ENCODE measurements at regions of chr2 and their contacts with region 1.

Region 1: DNA sequence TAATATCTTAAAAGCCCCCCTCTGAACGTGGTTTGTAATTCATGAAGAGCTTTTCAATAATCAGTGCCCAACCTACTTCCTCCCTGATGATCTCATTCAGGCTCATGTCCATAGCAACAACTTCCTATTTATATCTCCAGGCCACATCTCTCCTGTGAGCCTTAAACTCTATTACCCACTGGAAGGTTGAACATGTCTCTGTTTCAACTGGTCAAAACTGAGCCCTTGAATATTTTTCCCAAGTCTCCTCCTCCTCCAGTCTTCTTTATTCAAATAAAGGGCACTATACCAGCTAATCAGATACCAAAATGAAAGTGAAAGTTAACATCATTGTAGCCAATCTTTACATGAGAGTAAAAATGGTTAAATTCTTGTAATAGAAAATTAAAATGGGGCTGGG is 63.7 kb upstream of the ITGA4 start:
- DNase-seq: peak; percentile 18
- ATAC-seq: peak; percentile 90
- H3K4me3 ChIP-seq: peak overlapping the region; percentile 55 to 66 (median 55)
- H3K27ac ChIP-seq: no peak overlapping the region
- H3K4me1 ChIP-seq: no peaks in the 10 kb centered on the region
- H3K27me3 ChIP-seq: no peaks in the 10 kb centered on the region
- CTCF ChIP-seq: no peak
- EP300 ChIP-seq: no peak
- POLR2A ChIP-seq: no peak
- RAD21 ChIP-seq: no peak

Region 2: GRCh38 chr2:181308766-181309515 is 84.5 kb before region 1 on chr2:
- CTCF ChIA-PET with region 1: no interaction called
- POLR2A ChIA-PET with region 1: interaction called, 3 read pairs
- in situ Hi-C with region 1: no loop called
- intact Hi-C with region 1: loop called (anchors 2 kb)
- DNase-seq: no peak
- ATAC-seq: no peak
- H3K4me3 ChIP-seq: no peak overlapping the region
- H3K27ac ChIP-seq: no peak overlapping the region
- H3K4me1 ChIP-seq: peaks cover 23% of the 10 kb centered on the region
- H3K27me3 ChIP-seq: no peaks in the 10 kb centered on the region
- CTCF ChIP-seq: no peak
- EP300 ChIP-seq: no peak
- POLR2A ChIP-seq: no peak
- RAD21 ChIP-seq: no peak

Region 3: DNA sequence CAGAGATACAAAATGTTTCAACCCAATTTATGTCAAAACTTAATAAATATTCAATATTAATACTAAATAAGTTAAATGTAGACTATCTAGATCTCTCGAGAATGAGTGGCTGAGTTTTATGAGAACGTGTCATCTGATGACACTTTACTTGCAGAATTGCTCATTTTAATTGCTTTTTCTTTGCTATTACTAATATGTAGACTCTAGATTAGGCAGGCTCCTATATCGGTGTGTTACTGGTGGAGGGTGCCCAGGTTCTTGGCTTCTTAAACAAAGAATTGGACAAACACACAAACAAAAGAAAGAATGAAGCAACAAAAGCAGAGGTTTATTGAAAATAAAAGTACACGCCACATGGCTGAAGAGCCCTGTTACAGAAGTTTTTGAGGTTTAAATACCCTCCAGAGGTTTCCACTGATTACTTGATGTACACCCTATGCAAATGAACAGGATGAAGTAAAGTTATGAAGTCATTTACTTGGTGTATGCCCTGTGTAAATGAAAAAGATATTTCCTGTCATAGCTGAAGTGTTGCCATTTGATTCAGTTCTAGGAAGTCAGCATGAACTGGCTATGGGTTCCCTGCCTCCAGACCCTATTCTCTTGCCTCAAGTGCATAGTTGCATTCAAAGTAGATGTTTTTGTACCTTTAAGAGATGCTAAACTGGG is 59.2 kb before region 1 on chr2:
- CTCF ChIA-PET with region 1: no interaction called
- POLR2A ChIA-PET with region 1: no interaction called
- in situ Hi-C with region 1: no loop called
- intact Hi-C with region 1: no loop called
- DNase-seq: no peak
- ATAC-seq: no peak
- H3K4me3 ChIP-seq: no peak overlapping the region
- H3K27ac ChIP-seq: no peak overlapping the region
- H3K4me1 ChIP-seq: no peaks in the 10 kb centered on the region
- H3K27me3 ChIP-seq: no peaks in the 10 kb centered on the region; a peak in 1 of 5 replicates
- CTCF ChIP-seq: no peak
- EP300 ChIP-seq: no peak
- POLR2A ChIP-seq: no peak
- RAD21 ChIP-seq: no peak